Activated CD4-positive, alpha-beta T cell treated with anti-CD3 and anti-CD28 coated beads for 36 hours (primary cell): ENCODE measurements at regions of chr2 and their contacts with region 1.

Region 1: DNA sequence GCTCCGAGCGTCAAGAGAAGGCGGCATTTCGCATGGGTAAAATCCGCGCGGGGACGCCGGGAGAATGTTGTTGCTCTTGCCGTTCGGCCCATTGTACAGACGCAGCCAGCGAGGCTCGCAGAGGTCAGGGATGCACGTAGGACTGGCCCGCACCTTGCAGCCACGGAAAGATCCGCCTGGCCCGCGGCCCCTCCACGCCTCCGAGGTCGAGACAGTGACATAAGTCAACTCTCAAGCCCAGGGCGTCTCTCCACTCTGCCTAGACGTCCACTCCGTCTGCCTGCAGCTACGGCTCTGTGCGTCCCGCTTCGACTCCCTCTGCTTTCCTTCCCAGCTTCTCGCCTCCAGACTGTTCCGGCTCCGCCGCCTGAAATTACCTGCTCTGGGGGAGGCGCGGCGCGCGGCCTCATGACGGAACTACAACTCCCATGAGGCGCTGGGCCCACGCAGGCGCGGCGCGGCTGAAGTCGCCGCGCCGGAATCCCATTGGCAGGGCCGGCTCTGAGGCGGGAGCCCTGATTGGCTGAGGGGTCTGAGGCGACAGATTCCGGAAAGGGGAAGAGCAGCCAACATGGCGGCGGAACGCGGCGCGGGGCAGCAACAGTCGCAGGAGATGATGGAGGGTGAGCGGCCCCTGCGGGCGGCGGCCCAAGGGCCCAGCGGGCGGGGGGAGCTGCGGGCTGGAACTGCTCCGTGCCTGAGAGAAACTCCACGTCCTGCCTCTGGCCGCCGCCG is at the start of gene PPP1R7:
- DNase-seq: peak; percentile 98
- ATAC-seq: peak; percentile 79
- H3K4me3 Mint-ChIP-seq: peak within 1 kb of the TSS; percentile 88
- H3K27ac Mint-ChIP-seq: peak within 1 kb of the TSS; percentile 91
- H3K4me1 Mint-ChIP-seq: peaks cover 51% of the 10 kb centered on the region
- H3K27me3 Mint-ChIP-seq: no peaks in the 10 kb centered on the region
- total RNA-seq, gene PPP1R7: 104 to 129 TPM

Region 2: DNA sequence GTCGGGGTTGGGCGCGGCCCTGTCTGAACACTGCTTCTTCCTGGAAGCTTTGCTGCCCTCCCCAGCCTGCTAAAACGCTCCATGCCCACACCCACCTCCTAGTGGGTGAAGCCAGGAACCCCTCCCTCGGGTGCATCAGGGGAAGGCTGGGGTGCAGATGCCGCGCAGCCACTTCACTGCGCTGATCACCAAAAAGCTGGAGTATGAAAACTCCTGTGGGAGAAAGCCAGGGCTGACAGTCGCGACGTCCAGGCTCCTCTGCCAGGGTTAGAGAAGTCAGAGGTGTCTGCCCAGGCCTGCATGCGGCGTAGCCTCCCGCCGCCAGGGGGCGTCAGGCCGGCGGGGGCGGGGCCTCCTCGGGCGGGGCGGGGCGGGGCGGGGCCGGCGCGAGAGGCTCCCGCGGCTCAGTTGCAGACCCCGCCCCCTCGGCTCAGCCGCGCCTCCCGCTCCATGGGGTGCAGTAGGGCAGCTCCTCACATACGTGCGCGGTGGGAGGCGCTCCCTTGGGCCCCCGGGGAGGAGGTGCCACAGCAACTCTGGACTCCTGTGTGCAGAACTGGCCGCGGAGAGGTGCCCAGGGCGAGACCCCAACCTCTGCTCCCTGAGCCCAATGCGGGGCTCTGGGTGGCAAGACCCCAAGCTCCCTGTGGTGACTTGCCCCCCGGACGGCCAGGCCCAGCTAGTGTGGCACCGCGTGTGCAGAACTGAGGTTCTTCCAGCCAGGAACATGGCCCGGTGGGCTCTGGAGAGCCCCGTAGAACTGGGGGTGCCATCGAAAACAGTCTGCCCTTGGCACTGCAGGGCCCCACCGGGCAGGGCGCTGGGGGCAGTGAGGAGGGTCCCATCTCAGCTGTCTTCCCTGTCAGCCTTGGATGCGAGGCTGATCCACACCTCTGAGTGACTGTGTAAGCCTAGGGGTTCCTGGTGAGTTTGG is 583.6 kb before region 1 on chr2:
- CTCF ChIA-PET with region 1: no interaction called
- POLR2A ChIA-PET with region 1: no interaction called
- intact Hi-C with region 1: loop called in 1 of 2 experiments (anchors 1 kb)
- DNase-seq: peak; percentile 98
- ATAC-seq: peak; percentile 67
- H3K4me3 Mint-ChIP-seq: peak overlapping the region; percentile 87
- H3K27ac Mint-ChIP-seq: peak overlapping the region; percentile 98
- H3K4me1 Mint-ChIP-seq: peaks cover 65% of the 10 kb centered on the region
- H3K27me3 Mint-ChIP-seq: no peaks in the 10 kb centered on the region

Region 3: GRCh38 chr2:240851078-240851991 is 298.8 kb before region 1 on chr2:
- CTCF ChIA-PET with region 1: no interaction called
- POLR2A ChIA-PET with region 1: no interaction called
- intact Hi-C with region 1: loop called in 1 of 2 experiments (anchors 5 kb)
- DNase-seq: peak; percentile 91
- ATAC-seq: peak; percentile 97
- H3K4me3 Mint-ChIP-seq: no peak overlapping the region
- H3K27ac Mint-ChIP-seq: no peak overlapping the region
- H3K4me1 Mint-ChIP-seq: no peaks in the 10 kb centered on the region
- H3K27me3 Mint-ChIP-seq: peaks cover 3% of the 10 kb centered on the region

Region 4: GRCh38 chr2:241179899-241180298 is 29.8 kb after region 1 on chr2:
- CTCF ChIA-PET with region 1: interaction called, 3 read pairs
- POLR2A ChIA-PET with region 1: interaction called, 5 read pairs
- intact Hi-C with region 1: loop called in 1 of 2 experiments (anchors 1 kb)
- DNase-seq: peak; percentile 69
- ATAC-seq: peak; percentile 92
- H3K4me3 Mint-ChIP-seq: no peak overlapping the region
- H3K27ac Mint-ChIP-seq: peak overlapping the region; percentile 47
- H3K4me1 Mint-ChIP-seq: peaks cover 13% of the 10 kb centered on the region
- H3K27me3 Mint-ChIP-seq: no peaks in the 10 kb centered on the region

Region 5: DNA sequence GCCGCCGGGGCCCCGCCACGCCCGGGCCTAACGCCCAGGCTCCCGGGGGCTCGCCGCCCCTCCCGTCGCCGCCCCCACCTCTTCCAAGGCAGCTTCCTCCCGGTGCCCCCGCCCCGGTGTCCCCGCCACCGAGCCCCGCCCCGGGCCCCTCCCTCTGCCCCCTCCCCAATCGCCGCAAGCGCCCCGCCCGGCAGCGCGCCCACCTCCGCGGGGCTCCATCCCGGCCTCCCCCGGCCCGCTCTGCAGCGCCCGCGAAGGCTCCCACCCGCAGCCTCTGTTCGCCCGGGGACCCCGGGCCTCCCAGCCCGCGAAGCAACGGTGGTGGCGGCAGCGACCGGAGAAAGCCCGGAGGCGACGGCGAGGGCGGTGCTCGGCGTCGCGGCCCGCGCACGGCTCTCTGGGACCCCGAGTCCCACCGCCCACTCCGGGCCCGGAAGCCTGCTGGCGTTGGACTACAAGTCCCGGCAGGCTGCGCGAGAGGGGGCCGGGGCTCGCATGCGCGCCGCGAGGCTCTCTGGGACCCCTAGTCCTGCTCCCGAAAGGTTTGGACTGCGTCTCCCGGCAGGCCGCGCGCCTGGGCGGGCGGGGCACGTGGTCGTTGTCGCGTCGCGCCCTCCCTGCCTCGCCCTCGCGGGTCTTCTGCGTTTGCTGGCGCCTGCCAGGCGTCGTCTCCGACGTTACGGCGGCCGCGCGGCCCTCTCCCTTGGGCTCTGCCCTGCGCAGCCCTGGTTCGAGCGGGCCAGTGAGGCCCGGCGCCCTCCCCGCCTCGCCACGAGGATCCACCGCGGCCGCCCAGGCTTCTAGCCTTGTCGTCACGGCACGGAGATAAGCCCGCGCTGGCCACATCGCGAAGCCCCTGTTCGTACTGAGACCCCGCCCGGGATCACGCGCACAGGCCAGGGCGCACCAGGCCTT is 358.4 kb after region 1 on chr2 and contains the start of gene STK25:
- CTCF ChIA-PET with region 1: no interaction called
- POLR2A ChIA-PET with region 1: no interaction called
- intact Hi-C with region 1: loop called in 1 of 2 experiments (anchors 1 kb)
- DNase-seq: peak; percentile 99
- ATAC-seq: peak; percentile 96
- H3K4me3 Mint-ChIP-seq: peak within 1 kb of the TSS; percentile 79
- H3K27ac Mint-ChIP-seq: peak within 1 kb of the TSS; percentile 58
- H3K4me1 Mint-ChIP-seq: peaks cover 19% of the 10 kb centered on the region
- H3K27me3 Mint-ChIP-seq: peaks cover 3% of the 10 kb centered on the region
- total RNA-seq, gene STK25: 93.5 to 123 TPM

Region 6: GRCh38 chr2:241686649-241687425 is 536.7 kb after region 1 on chr2 and contains the start of gene DTYMK:
- CTCF ChIA-PET with region 1: no interaction called
- POLR2A ChIA-PET with region 1: no interaction called
- intact Hi-C with region 1: loop called in 1 of 2 experiments (anchors 1 kb)
- DNase-seq: peak; percentile 98
- ATAC-seq: peak; percentile 96
- H3K4me3 Mint-ChIP-seq: peak within 1 kb of the TSS; percentile 98
- H3K27ac Mint-ChIP-seq: peak within 1 kb of the TSS; percentile 96
- H3K4me1 Mint-ChIP-seq: peaks cover 32% of the 10 kb centered on the region
- H3K27me3 Mint-ChIP-seq: no peaks in the 10 kb centered on the region
- total RNA-seq, gene DTYMK: 79.8 to 93.1 TPM

Region 7: GRCh38 chr2:241877989-241878970 is 728.2 kb after region 1 on chr2:
- CTCF ChIA-PET with region 1: no interaction called
- POLR2A ChIA-PET with region 1: no interaction called
- intact Hi-C with region 1: loop called in 1 of 2 experiments (anchors 1 kb)
- DNase-seq: peak; percentile 88
- ATAC-seq: peak; percentile 21
- H3K4me3 Mint-ChIP-seq: no peak overlapping the region
- H3K27ac Mint-ChIP-seq: no peak overlapping the region
- H3K4me1 Mint-ChIP-seq: peaks cover 26% of the 10 kb centered on the region
- H3K27me3 Mint-ChIP-seq: no peaks in the 10 kb centered on the region